ENCODE measurements at regions of chr1 and their contacts with region 1.

Region 1: DNA sequence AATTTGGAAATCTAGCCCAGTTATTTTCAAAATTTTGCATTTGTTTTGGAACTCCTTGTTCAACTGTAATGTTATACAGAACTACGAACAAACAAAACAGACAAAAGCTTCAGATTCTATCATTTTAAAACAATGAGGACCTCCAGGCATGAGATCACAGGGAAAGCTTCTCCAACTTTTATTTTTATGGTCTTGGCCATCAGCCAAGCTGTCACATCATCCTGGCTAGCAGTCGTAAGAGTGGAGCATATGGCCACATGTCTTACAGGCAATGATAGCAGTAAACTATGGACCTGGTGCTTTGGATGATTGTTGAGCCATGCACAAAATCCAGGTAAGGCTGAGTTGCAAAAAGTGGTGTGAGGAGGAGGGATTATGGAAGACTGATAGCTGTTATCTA is 299.6 kb downstream of the LMX1A start:
- DNase-seq: no peak
- ATAC-seq: no peak
- H3K4me3 ChIP-seq: no peak overlapping the region
- H3K27ac ChIP-seq: no peak overlapping the region
- H3K4me1 ChIP-seq: no peaks in the 10 kb centered on the region
- H3K27me3 ChIP-seq: no peaks in the 10 kb centered on the region

Region 2: GRCh38 chr1:164999146-164999545 is 57.8 kb before region 1 on chr1:
- intact Hi-C with region 1: loop called in 1 of 4 experiments (anchors 10 kb)
- DNase-seq: no peak
- ATAC-seq: no peak
- H3K4me3 ChIP-seq: no peak overlapping the region
- H3K27ac ChIP-seq: no peak overlapping the region
- H3K4me1 ChIP-seq: no peaks in the 10 kb centered on the region
- H3K27me3 ChIP-seq: no peaks in the 10 kb centered on the region

Region 3: DNA sequence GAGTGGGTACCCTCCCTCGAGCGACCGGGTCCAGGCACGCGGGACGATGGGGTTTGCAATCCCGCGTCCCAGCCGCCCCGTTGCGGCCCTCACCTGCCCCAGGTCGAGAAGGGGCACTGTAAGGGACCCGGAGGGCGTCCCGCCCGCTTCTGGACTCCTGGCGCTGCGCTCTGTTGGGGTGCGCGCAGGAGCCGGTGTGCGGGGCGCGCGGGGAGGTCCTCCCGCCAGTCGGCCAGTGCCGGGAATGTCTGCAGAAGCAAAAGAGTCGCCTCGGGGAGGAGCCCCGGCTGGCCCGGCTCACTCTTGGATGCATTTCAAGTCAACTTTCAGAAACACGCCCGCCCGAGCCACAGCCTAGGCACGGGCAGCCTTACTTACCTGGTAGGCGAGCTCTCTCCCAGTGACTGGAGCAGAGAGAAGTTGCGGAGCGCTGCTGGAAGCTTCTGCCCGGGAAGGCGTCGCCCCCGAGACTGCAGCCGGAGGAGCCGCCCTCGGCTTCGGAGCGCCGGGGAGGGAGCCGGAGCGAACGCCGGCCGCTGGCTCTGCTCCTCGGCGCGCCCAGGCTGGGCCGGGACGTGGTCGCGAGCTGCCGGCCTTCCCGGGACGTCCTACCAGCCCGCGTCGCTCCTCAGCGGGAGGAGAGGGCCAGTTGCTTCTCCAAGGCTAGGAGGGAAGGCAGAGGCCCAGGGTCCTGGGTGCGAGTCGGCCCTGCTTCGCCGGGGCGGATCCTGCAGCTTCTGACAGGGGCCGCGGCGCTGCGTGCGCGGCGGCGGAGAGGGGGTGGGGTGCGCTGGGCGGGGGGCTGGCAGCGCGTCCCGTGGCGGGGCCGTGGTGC is 299.3 kb after region 1 on chr1 and contains the start of gene LMX1A:
- intact Hi-C with region 1: no loop called
- DNase-seq: peak; percentile 24 to 60 (median 51)
- ATAC-seq: peak; percentile 68 to 75
- H3K4me3 ChIP-seq: peak within 1 kb of the TSS; percentile 40
- H3K27ac ChIP-seq: no peak within 1 kb of the TSS
- H3K4me1 ChIP-seq: peaks cover 10% of the 10 kb centered on the region
- H3K27me3 ChIP-seq: no peaks in the 10 kb centered on the region
- total RNA-seq, gene LMX1A: not detected

Measured in right cardiac atrium (tissue), 5 donors.